ENCODE measurements at regions of chr1 and their contacts with region 1.

Region 1: GRCh38 chr1:156767101-156767878 is at the start of gene PRCC:
- DNase-seq: peak; percentile 100
- ATAC-seq: peak; percentile 94
- H3K4me3 ChIP-seq: peak within 1 kb of the TSS; percentile 92
- H3K27ac ChIP-seq: peak within 1 kb of the TSS; percentile 87
- H3K4me1 ChIP-seq: no peaks in the 10 kb centered on the region
- H3K27me3 ChIP-seq: no peaks in the 10 kb centered on the region
- CTCF ChIP-seq: no peak
- EP300 ChIP-seq: no peak
- POLR2A ChIP-seq: peak; percentile 84
- RAD21 ChIP-seq: no peak
- polyA plus RNA-seq, gene PRCC: 23.8 to 30.1 TPM

Region 2: DNA sequence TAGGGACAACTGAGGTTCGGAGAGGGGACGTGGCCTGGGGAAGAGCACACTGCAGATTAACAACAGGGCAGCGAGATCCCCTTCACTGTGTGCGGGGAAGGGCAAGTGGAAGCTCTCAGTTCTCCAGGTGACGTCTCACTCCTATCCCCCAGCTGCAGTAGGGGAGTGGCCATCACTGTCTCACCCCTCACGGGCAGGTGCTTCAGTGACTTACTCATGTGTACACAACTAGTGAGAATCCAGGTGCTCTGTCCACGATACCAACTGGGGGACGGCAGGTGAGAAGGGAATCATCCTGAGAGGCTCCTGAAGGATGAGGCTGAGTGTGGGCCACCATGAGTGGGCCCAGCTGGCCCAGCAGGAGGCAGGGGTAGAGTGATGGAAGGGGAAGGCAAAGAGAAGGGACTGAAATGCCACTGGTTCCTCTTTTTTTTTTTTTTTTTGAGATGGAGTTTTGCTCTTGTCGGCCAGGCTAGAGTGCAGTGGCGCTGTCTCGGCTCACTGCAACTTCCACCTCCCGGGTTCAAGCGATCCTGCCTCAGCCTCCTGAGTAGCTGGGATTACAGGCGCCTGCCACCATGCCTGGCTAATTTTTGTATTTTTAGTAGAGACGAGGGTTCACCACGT is 372.3 kb before region 1 on chr1:
- CTCF ChIA-PET with region 1: no interaction called
- POLR2A ChIA-PET with region 1: no interaction called
- RAD21 ChIA-PET with region 1: no interaction called
- SMC1A ChIA-PET with region 1: no interaction called
- in situ Hi-C with region 1: no loop called
- intact Hi-C with region 1: no loop called
- DNase-seq: no peak
- ATAC-seq: no peak; the same call in 2 of the 3 replicates
- H3K4me3 ChIP-seq: no peak overlapping the region
- H3K27ac ChIP-seq: no peak overlapping the region
- H3K4me1 ChIP-seq: no peaks in the 10 kb centered on the region; the same call in 1 of the 2 replicates
- H3K27me3 ChIP-seq: no peaks in the 10 kb centered on the region; a peak in 1 of 4 replicates
- CTCF ChIP-seq: no peak; a peak in 1 of 6 replicates
- EP300 ChIP-seq: no peak
- POLR2A ChIP-seq: no peak
- RAD21 ChIP-seq: no peak

Region 3: GRCh38 chr1:156677616-156678596 is 89.4 kb before region 1 on chr1:
- CTCF ChIA-PET with region 1: no interaction called
- POLR2A ChIA-PET with region 1: no interaction called
- RAD21 ChIA-PET with region 1: no interaction called
- SMC1A ChIA-PET with region 1: no interaction called
- in situ Hi-C with region 1: no loop called
- intact Hi-C with region 1: no loop called
- DNase-seq: no peak
- ATAC-seq: peak; percentile 70
- H3K4me3 ChIP-seq: no peak overlapping the region
- H3K27ac ChIP-seq: no peak overlapping the region
- H3K4me1 ChIP-seq: peaks cover 9% of the 10 kb centered on the region
- H3K27me3 ChIP-seq: peaks cover 16 to 21% of the 10 kb centered on the region in 2 experiments
- CTCF ChIP-seq: peak; percentile 79 to 86 (median 83)
- EP300 ChIP-seq: no peak
- POLR2A ChIP-seq: no peak
- RAD21 ChIP-seq: peak; percentile 96

Region 4: DNA sequence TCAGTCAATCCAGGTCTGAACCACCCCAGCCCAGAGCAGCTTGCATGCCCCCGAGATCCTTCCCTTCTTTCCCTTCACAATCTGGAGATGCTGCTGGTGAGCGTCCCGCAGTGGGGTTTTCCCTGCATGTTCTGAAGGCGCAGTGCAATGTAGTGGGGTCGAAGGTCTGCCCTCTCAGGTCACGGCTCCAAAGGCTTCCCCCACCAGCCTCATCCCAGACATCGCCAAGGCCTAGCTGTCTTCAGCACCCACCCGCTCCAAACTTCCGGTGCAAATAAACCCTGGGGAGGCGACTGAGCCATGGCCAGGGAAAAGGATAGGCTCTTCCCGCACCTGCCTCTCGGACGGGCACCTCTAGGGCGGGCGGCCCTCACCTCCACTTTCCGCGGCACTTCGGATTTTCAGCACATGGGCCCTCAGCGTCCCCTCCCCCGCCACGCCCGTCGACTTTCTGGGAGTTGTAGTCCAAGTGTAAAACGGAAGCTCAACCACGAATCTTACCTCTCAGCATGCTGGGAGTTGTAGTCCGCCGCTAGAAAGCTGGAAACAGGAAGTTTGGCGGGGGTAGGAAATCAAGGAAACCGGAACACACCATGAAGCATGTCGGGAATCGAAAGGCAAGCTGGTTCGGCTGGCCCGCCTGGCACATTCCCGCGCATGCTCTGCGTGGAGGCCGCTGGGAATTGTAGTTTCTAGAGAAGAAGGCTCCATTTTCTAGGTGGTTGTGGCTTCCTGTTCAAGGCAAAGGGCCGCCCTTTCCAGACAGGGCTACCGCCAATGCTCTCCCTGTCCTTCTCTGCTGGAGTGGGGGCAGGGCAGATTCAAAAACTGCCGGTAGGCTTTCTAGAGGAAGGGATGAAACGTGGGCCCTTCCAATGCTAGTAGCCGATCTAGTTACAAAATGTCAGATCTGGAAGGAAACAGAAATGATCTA is 26.3 kb before region 1 on chr1 and contains the start of gene MRPL24:
- CTCF ChIA-PET with region 1: interaction called, 8 read pairs
- POLR2A ChIA-PET with region 1: interaction called, 43 read pairs
- RAD21 ChIA-PET with region 1: interaction called, 49 read pairs
- SMC1A ChIA-PET with region 1: interaction called, 36 read pairs
- in situ Hi-C with region 1: no loop called
- intact Hi-C with region 1: loop called (anchors 1 kb)
- DNase-seq: peak; percentile 99
- ATAC-seq: peak; percentile 93
- H3K4me3 ChIP-seq: peak within 1 kb of the TSS; percentile 68
- H3K27ac ChIP-seq: peak within 1 kb of the TSS; percentile 76
- H3K4me1 ChIP-seq: peaks cover 5% of the 10 kb centered on the region
- H3K27me3 ChIP-seq: no peaks in the 10 kb centered on the region
- CTCF ChIP-seq: no peak
- EP300 ChIP-seq: no peak; a peak in 2 of 4 replicates
- POLR2A ChIP-seq: peak; percentile 89
- RAD21 ChIP-seq: no peak
- polyA plus RNA-seq, gene MRPL24: 245 to 269 TPM

Region 5: DNA sequence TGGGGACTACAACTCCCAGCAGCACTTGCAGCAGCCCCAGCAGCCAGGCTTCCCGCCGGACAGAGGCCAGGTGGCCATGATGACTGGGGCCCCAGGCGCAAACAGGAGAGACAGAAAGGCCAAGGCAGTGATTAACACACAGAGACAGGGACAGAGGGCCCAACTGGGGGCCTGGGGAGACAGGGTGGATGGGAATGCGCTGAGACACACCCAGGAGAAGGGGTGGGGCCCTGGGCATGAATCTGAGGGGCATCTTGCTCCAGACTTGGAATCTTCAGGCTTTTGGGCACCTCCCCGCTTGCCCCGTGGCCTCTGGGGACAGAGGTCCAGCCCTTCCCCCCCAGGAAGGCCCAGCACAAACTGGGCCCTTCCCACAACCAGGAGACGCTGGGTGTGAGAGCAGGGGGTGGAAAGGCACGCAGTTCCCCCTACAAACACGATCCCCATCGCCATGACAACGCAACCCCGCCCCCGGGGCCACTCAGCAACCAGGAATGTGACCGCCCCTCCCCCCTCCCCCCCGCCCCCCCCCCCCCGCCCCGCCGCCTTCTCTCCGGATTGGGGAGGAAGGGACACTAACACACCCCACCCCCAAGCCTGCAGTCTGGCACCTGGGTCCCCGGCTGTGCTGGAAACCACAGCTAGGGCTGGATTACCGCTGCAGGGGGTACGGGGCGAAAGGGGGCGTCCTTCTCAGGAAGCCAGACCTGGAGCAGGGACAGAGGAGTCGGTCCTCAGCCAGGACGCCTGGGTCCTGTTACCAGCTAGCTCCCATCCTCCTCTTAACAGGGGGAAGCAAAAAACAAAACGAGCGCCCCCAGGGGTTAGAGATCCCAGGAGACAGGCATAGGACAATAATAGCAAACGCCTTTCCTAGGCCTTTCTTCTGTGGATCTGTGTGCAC is 20.3 kb before region 1 on chr1:
- CTCF ChIA-PET with region 1: interaction called, 22 read pairs
- POLR2A ChIA-PET with region 1: interaction called, 43 read pairs
- RAD21 ChIA-PET with region 1: interaction called, 49 read pairs
- SMC1A ChIA-PET with region 1: interaction called, 36 read pairs
- in situ Hi-C with region 1: no loop called
- intact Hi-C with region 1: loop called (anchors 1 kb)
- DNase-seq: no peak
- ATAC-seq: peak; percentile 61
- H3K4me3 ChIP-seq: peak overlapping the region; percentile 99
- H3K27ac ChIP-seq: peak overlapping the region; percentile 99
- H3K4me1 ChIP-seq: peaks cover 15% of the 10 kb centered on the region
- H3K27me3 ChIP-seq: no peaks in the 10 kb centered on the region
- CTCF ChIP-seq: peak in 2 of 3 experiments; percentile 7 to 18; a peak in 2 of 6 replicates
- EP300 ChIP-seq: no peak
- POLR2A ChIP-seq: no peak
- RAD21 ChIP-seq: no peak

Region 6: DNA sequence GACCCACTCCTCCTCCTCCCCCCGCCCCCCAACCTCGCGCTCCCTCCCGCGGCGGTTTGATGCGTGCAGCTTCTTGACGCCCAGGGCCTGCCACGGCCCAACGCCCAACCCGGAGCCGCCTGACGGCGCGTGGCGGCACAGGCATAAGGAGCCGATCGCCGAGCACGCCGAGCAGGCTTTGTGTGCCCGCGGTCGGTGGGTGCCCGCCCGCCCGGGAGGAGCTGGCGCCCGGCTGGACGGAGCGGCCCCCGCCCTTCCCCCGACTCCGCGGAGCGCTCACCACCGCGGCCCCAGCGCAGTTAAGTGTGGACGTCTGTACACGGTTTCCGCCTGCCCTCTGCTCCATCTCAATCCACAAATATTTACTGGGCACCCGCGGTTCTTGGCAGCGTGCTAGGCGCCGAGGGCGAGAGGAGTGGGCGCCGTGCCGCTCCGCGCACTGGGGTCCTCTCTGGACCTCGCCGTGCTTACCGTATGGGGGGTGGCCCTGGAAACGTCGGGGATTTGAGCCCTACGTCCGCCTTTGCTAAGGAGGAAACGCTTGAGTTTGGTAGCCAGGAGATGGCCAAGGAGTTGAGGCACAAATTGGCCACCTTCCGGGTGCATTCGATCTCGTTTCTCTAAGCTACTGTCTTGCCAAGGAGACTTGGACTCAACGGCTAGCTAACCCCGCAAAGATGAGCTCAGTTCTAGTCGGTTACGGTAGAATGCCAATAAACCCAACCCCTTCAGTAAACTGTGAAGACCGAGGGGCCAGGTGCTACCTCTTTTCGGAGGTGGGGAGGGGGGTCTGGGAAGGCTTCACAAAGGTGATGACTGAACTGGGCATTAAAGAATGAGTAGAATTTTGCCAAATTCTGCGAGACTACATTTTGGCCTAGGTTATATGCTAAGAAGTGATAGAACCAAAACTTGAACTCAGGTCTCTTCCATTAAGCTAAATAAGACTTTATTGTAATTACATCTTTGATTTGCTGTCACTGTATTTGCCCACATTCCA is 15.2 kb before region 1 on chr1:
- CTCF ChIA-PET with region 1: interaction called, 22 read pairs
- POLR2A ChIA-PET with region 1: interaction called, 19 read pairs
- RAD21 ChIA-PET with region 1: interaction called, 31 read pairs
- SMC1A ChIA-PET with region 1: interaction called, 24 read pairs
- in situ Hi-C with region 1: no loop called
- intact Hi-C with region 1: loop called (anchors 1 kb)
- DNase-seq: peak; percentile 82
- ATAC-seq: peak; percentile 80
- H3K4me3 ChIP-seq: peak overlapping the region; percentile 81
- H3K27ac ChIP-seq: peak overlapping the region; percentile 99
- H3K4me1 ChIP-seq: peaks cover 25% of the 10 kb centered on the region
- H3K27me3 ChIP-seq: no peaks in the 10 kb centered on the region
- CTCF ChIP-seq: 0 out of 6 replicates have a peak, but pooled peaks of 1 of the 3 experiments have one; percentile 3
- EP300 ChIP-seq: no peak
- POLR2A ChIP-seq: peak; percentile 84
- RAD21 ChIP-seq: no peak

Region 7: GRCh38 chr1:156920233-156921052 is 153.2 kb after region 1 on chr1 and contains the start of gene LRRC71:
- CTCF ChIA-PET with region 1: no interaction called
- POLR2A ChIA-PET with region 1: no interaction called
- RAD21 ChIA-PET with region 1: no interaction called
- SMC1A ChIA-PET with region 1: no interaction called
- in situ Hi-C with region 1: no loop called
- intact Hi-C with region 1: no loop called
- DNase-seq: no peak
- ATAC-seq: peak; percentile 90
- H3K4me3 ChIP-seq: no peak within 1 kb of the TSS
- H3K27ac ChIP-seq: no peak within 1 kb of the TSS
- H3K4me1 ChIP-seq: no peaks in the 10 kb centered on the region
- H3K27me3 ChIP-seq: peaks cover 19% of the 10 kb centered on the region in 2 experiments
- CTCF ChIP-seq: peak; percentile 35 to 52 (median 41); a peak in 5 of 6 replicates
- EP300 ChIP-seq: no peak
- POLR2A ChIP-seq: no peak
- RAD21 ChIP-seq: peak; percentile 24; the same call in 1 of the 2 replicates
- polyA plus RNA-seq, gene LRRC71: not detected

Measured in GM12878 (cell line).